CD8-positive, alpha-beta memory T cell (primary cell): ENCODE measurements at regions of chr2 and their contacts with region 1.

Region 1: DNA sequence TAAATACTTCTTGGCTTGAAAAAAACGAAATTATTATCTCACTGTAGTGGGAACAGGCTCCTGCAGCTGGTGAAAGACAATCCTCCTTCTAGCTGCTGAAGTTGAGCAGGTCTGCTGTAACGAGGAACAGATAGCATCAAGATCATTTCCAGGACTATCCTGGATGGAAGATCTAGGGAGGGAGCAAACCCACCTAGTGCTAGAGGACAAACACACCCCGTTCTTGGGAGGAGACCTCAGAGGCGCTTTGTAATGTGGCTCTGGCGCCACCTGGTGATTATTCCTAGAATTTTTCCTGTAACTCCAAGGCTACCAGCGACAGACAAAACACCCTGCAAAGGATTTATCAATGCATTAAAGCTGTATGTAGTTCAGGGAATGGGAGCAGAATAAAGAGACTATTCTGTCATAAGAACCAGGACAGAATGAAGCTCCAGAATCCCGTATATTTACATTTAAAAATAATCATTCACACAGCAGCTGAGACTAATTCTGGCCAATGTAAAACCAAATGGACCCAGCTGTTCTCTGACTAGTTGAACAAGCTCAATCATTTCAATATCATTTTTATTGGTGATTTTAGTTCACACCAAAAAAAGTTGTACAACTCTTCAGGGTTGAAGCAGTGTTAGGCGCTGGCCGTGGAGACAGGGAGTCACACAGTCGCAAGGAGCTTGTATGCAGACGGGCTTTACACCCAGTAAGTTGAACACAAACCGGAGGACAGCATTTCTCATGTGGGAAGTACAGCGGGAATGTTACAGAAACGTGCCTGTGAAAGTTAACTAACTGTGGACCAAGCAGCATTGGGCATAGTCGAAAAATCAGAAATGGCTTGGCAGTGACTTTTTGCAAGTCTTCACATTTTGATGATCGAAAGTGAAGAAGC is 290.3 kb downstream of the TRIB2 start:
- DNase-seq: peak; percentile 40 to 66 (median 53)
- H3K4me3 ChIP-seq: no peak overlapping the region
- H3K4me3 Mint-ChIP-seq: no peak overlapping the region
- H3K27ac ChIP-seq: no peak overlapping the region
- H3K27ac Mint-ChIP-seq: no peak overlapping the region
- H3K4me1 ChIP-seq: no peaks in the 10 kb centered on the region
- H3K4me1 Mint-ChIP-seq: peaks cover 2 to 4% (median 3%) of the 10 kb centered on the region in 3 donors
- H3K27me3 ChIP-seq: no peaks in the 10 kb centered on the region
- H3K27me3 Mint-ChIP-seq: peaks cover 2 to 14% of the 10 kb centered on the region in 2 donors

Region 2: DNA sequence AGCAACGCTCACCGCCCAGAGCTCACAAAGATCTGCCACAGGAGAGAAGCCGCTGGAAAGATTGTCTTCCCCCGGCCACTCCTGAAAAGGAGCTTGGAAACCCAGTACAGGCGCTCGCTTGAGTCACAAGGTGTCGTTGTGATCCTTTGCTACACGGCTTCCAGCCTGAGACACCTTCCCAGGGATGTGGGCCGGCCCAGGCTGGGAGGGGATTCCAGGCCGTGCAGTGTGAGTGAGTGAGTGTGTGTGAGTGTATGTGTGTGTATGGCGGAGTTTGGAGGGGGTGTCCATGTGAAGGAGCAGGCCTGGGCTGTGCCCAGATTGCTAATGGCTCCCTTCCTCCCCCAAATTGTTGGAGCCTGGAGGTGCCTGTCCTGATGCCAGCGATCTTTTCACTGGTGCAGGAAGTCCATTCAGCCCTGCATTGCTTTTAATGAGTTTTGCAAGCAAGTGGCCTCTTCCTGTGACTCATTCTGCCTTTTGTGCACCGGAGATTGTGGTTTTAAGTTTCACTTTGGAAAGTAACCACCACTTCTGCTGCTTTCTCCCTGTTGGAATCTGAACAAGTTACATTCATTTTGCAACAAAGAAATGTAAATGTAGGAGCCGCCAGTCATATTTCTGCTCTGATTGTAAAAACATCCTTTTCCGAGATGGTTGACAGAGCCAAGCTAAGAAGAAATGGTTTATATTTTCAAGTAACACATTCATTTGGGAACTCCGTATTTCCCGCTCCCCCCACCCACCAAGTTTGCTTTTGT is 1176.9 kb before region 1 on chr2:
- CTCF ChIA-PET with region 1: interaction called, 27 read pairs
- POLR2A ChIA-PET with region 1: interaction called, 3 read pairs
- DNase-seq: peak; percentile 2 to 57 (median 49)
- H3K4me3 ChIP-seq: peak overlapping the region; percentile 38
- H3K4me3 Mint-ChIP-seq: peak overlapping the region; percentile 59 to 86 (median 82)
- H3K27ac ChIP-seq: peak overlapping the region; percentile 26
- H3K27ac Mint-ChIP-seq: peak overlapping the region in 6 of 8 donors; percentile 53 to 86 (median 64)
- H3K4me1 ChIP-seq: peaks cover 22% of the 10 kb centered on the region
- H3K4me1 Mint-ChIP-seq: peaks cover 23 to 58% (median 48%) of the 10 kb centered on the region in 3 donors
- H3K27me3 ChIP-seq: no peaks in the 10 kb centered on the region
- H3K27me3 Mint-ChIP-seq: no peaks in the 10 kb centered on the region

Region 3: GRCh38 chr2:11863513-11864328 is 1143.4 kb before region 1 on chr2:
- CTCF ChIA-PET with region 1: interaction called, 26 read pairs
- POLR2A ChIA-PET with region 1: no interaction called
- DNase-seq: peak; percentile 50 to 73 (median 57)
- H3K4me3 ChIP-seq: peak overlapping the region; percentile 2
- H3K4me3 Mint-ChIP-seq: peak overlapping the region; percentile 28 to 72 (median 44)
- H3K27ac ChIP-seq: no peak overlapping the region
- H3K27ac Mint-ChIP-seq: no peak overlapping the region
- H3K4me1 ChIP-seq: peaks cover 7% of the 10 kb centered on the region
- H3K4me1 Mint-ChIP-seq: peaks cover 5 to 21% (median 11%) of the 10 kb centered on the region in 3 donors
- H3K27me3 ChIP-seq: no peaks in the 10 kb centered on the region
- H3K27me3 Mint-ChIP-seq: peaks cover 0 to 4% of the 10 kb centered on the region in 2 donors

Region 4: DNA sequence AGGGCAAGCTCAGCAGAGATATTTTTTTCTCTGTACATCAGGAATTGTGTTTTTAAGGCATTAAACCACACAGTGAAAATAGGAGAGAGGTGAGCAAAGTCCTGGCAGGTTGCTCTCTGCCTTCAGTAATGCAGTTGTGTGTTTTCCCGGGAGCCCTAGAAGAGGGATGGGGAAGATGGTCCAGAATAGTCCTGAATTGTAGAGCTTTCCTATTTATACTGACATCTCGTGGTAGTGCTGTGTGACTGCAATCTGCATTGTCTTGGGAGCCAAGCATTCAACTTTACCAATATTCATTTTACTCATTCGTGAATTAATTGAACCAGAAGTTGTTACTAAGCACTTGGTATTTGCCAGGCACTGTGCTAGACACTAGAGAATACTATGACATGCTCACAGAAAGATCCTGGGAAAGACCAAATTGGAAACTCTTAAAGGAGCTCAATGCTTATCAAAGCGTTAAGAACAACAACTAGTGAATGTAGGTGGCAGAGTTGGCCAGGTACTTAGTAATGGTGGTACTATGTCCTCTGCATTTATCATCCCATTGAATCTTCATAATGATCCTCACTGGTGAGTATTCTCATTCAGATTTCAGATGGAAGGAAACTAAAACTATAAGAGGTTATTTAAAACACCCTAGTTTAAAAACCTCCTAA is 75.8 kb before region 1 on chr2:
- CTCF ChIA-PET with region 1: interaction called, 17 read pairs
- POLR2A ChIA-PET with region 1: no interaction called
- DNase-seq: peak in 1 of 5 donors; percentile 25
- H3K4me3 ChIP-seq: no peak overlapping the region
- H3K4me3 Mint-ChIP-seq: no peak overlapping the region
- H3K27ac ChIP-seq: no peak overlapping the region
- H3K27ac Mint-ChIP-seq: no peak overlapping the region
- H3K4me1 ChIP-seq: no peaks in the 10 kb centered on the region
- H3K4me1 Mint-ChIP-seq: peaks cover 5 to 15% (median 7%) of the 10 kb centered on the region in 3 donors
- H3K27me3 ChIP-seq: no peaks in the 10 kb centered on the region
- H3K27me3 Mint-ChIP-seq: peaks cover 0 to 1% of the 10 kb centered on the region in 2 donors

Region 5: DNA sequence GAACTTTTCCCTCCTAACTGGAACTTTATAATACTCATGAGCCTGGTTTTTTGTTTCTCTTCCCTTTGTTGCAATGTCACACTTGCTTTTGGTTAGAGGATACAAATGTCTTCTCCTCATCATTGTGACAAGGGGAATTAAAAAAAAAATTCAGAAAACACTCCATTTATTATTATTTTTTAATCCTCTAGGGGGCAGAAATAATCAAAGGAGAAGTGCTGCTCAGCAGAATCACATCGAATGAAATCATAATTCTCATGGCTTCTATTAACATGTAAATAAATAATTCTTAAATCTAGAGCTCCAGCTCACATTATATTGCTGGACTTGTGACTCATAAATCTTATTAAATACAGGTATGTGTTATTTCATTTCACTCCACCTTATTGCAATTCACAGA is 16.6 kb before region 1 on chr2:
- CTCF ChIA-PET with region 1: interaction called, 11 read pairs
- POLR2A ChIA-PET with region 1: no interaction called
- DNase-seq: no peak
- H3K4me3 ChIP-seq: no peak overlapping the region
- H3K4me3 Mint-ChIP-seq: no peak overlapping the region
- H3K27ac ChIP-seq: no peak overlapping the region
- H3K27ac Mint-ChIP-seq: no peak overlapping the region
- H3K4me1 ChIP-seq: no peaks in the 10 kb centered on the region
- H3K4me1 Mint-ChIP-seq: peaks cover 10 to 11% (median 11%) of the 10 kb centered on the region in 3 donors
- H3K27me3 ChIP-seq: no peaks in the 10 kb centered on the region
- H3K27me3 Mint-ChIP-seq: peaks cover 0 to 1% of the 10 kb centered on the region in 2 donors

Region 6: DNA sequence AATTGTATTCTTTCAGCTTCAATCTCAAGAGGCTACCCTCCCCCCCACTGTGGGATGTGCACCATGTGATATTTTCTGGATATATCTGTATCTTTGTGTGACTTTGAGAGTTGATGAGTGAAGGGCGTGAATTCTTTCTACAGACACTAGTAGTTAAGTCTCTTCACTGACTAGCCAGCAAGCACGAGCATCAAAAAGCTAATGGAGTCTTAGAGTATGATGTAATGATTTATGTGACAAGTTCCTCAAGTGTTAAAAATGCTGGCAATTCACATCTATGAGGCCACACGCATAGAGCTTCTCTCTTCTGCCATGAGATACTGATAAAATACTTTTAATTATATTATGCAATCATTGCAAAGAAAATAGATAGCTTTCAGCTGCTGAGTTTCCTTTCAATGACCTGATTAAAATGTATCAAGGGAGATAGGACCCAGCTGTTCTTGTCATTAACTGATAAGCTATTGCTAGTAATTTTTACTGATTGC is 14.4 kb after region 1 on chr2:
- CTCF ChIA-PET with region 1: interaction called, 13 read pairs
- POLR2A ChIA-PET with region 1: no interaction called
- DNase-seq: no peak
- H3K4me3 ChIP-seq: no peak overlapping the region
- H3K4me3 Mint-ChIP-seq: no peak overlapping the region
- H3K27ac ChIP-seq: no peak overlapping the region
- H3K27ac Mint-ChIP-seq: no peak overlapping the region
- H3K4me1 ChIP-seq: no peaks in the 10 kb centered on the region
- H3K4me1 Mint-ChIP-seq: no peaks in the 10 kb centered on the region
- H3K27me3 ChIP-seq: peaks cover 5% of the 10 kb centered on the region
- H3K27me3 Mint-ChIP-seq: peaks cover 9 to 69% of the 10 kb centered on the region in 2 donors

Region 7: GRCh38 chr2:13135856-13136255 is 128.8 kb after region 1 on chr2:
- CTCF ChIA-PET with region 1: no interaction called
- POLR2A ChIA-PET with region 1: no interaction called
- DNase-seq: no peak
- H3K4me3 ChIP-seq: no peak overlapping the region
- H3K4me3 Mint-ChIP-seq: no peak overlapping the region
- H3K27ac ChIP-seq: no peak overlapping the region
- H3K27ac Mint-ChIP-seq: peak overlapping the region in 1 of 8 donors; percentile 55
- H3K4me1 ChIP-seq: no peaks in the 10 kb centered on the region
- H3K4me1 Mint-ChIP-seq: no peaks in the 10 kb centered on the region
- H3K27me3 ChIP-seq: no peaks in the 10 kb centered on the region
- H3K27me3 Mint-ChIP-seq: peaks cover 0 to 5% of the 10 kb centered on the region in 2 donors